H1 (cell line): ENCODE measurements at regions of chr5 and their contacts with region 1.

Region 1: GRCh38 chr5:150560401-150561193 is 52.7 kb downstream of the NDST1 start:
- DNase-seq: peak; percentile 56 to 96
- H3K4me3 ChIP-seq: peak overlapping the region in 1 of 4 experiments; percentile 23; a peak in 1 of 8 replicates
- H3K27ac ChIP-seq: 0 out of 2 replicates have a peak overlapping the region, but pooled peaks have one; percentile 2
- H3K4me1 ChIP-seq: peaks cover 2 to 9% (median 4%) of the 10 kb centered on the region in 4 experiments
- H3K27me3 ChIP-seq: no peaks in the 10 kb centered on the region
- CTCF ChIP-seq: peak; percentile 50 to 91 (median 82)
- EP300 ChIP-seq: peak in 1 of 2 experiments; percentile 20; a peak in 1 of 3 replicates
- POLR2A ChIP-seq: no peak
- RAD21 ChIP-seq: peak; percentile 93 to 94

Region 2: DNA sequence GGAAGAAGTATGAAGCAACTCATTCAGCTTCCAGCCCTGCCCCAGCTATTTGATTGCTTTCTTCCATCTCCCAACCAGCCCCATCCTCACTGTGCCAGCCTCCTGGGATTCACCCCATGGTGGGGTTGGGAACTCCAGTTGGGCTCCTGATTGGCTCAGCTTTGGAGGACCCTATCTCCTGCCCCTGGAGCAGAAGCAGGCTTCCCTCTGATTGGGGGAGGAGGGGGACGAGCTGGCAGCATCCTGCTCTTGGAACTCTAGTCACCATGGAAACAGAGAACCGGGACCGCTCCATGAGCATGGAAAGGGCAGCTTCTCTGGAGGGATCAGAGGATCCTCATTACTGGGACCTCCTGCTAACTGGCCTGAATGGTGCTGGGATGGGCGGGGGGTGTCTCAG is 368.1 kb before region 1 on chr5:
- CTCF ChIA-PET with region 1: no interaction called
- POLR2A ChIA-PET with region 1: no interaction called
- DNase-seq: no peak
- H3K4me3 ChIP-seq: no peak overlapping the region
- H3K27ac ChIP-seq: no peak overlapping the region
- H3K4me1 ChIP-seq: peaks cover 0 to 14% (median 5%) of the 10 kb centered on the region in 4 experiments; a peak in 5 of 7 replicates
- H3K27me3 ChIP-seq: peaks cover 29 to 51% (median 48%) of the 10 kb centered on the region in 4 experiments
- CTCF ChIP-seq: no peak
- EP300 ChIP-seq: no peak
- POLR2A ChIP-seq: no peak
- RAD21 ChIP-seq: no peak

Region 3: GRCh38 chr5:150302301-150303069 is 258.1 kb before region 1 on chr5 and contains the start of gene ARSI:
- CTCF ChIA-PET with region 1: no interaction called
- POLR2A ChIA-PET with region 1: no interaction called
- DNase-seq: peak in 1 of 2 experiments; percentile 86
- H3K4me3 ChIP-seq: peak within 1 kb of the TSS; percentile 41 to 67 (median 55)
- H3K27ac ChIP-seq: no peak within 1 kb of the TSS
- H3K4me1 ChIP-seq: peaks cover 9 to 23% (median 14%) of the 10 kb centered on the region in 4 experiments
- H3K27me3 ChIP-seq: peaks cover 0 to 12% (median 7%) of the 10 kb centered on the region in 4 experiments; a peak in 5 of 7 replicates
- CTCF ChIP-seq: peak in 2 of 3 experiments; percentile 33 to 50; a peak in 3 of 4 replicates
- EP300 ChIP-seq: no peak
- POLR2A ChIP-seq: no peak
- RAD21 ChIP-seq: peak in 1 of 2 experiments; percentile 8; a peak in 1 of 4 replicates
- total RNA-seq, gene ARSI: 4.5 TPM in 2 replicates

Region 4: GRCh38 chr5:150464554-150465012 is 96.0 kb before region 1 on chr5:
- CTCF ChIA-PET with region 1: interaction called, 99 read pairs
- POLR2A ChIA-PET with region 1: interaction called, 3 read pairs
- DNase-seq: peak in 1 of 2 experiments; percentile 59
- H3K4me3 ChIP-seq: no peak overlapping the region
- H3K27ac ChIP-seq: no peak overlapping the region
- H3K4me1 ChIP-seq: peaks cover 3 to 24% (median 14%) of the 10 kb centered on the region in 4 experiments
- H3K27me3 ChIP-seq: no peaks in the 10 kb centered on the region
- CTCF ChIP-seq: no peak
- EP300 ChIP-seq: no peak
- POLR2A ChIP-seq: peak in 1 of 2 experiments; percentile 48; a peak in 2 of 3 replicates
- RAD21 ChIP-seq: no peak

Region 5: DNA sequence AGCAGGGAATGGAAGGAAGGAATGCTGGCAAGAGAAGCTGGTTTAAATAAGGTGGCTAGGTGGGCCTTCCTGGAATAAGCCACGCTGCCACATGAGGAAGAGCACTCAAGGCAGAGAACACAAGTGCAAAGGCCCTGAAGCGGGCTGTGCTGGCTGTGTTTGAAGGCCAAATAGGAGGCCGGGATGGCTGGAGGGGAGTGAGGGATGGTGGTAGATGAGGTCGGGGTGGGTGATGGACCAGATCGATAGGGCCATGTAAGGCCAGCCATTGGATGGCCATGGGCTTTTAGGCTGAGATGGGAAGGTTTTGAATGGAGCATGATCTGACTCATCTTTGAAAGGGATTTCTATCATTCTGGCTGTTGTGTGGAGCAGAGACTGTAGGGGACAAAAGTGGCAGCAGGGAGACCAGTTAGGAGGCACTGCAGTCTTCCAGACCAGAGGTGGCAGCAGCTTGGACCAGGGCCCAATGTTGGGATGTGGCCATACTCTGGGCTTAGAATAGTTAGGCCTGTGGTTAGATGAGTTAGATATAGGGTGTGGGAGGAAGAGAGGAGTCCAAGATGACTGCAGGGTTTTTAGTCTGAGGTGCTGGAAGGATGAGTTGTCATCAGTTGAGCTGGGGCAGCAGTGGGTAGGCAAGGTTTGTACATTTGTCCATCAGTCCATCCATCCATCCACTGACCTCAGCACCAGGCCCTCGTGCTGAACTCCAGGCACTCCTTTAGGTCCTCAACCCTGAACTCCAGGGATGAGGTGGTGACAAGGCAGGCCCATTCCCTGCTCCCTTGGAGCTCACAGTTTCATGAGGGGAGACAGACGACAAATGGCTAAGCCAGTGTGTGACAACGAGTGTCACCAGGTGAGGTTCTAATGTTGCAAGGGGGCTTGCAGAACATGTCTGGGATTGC is 22.3 kb before region 1 on chr5:
- CTCF ChIA-PET with region 1: interaction called, 17 read pairs
- POLR2A ChIA-PET with region 1: interaction called, 3 read pairs
- DNase-seq: no peak
- H3K4me3 ChIP-seq: no peak overlapping the region
- H3K27ac ChIP-seq: no peak overlapping the region
- H3K4me1 ChIP-seq: peaks cover 0 to 3% (median 0%) of the 10 kb centered on the region in 4 experiments; a peak in 2 of 7 replicates
- H3K27me3 ChIP-seq: no peaks in the 10 kb centered on the region
- CTCF ChIP-seq: no peak; a peak in 1 of 4 replicates
- EP300 ChIP-seq: no peak
- POLR2A ChIP-seq: no peak
- RAD21 ChIP-seq: no peak

Region 6: DNA sequence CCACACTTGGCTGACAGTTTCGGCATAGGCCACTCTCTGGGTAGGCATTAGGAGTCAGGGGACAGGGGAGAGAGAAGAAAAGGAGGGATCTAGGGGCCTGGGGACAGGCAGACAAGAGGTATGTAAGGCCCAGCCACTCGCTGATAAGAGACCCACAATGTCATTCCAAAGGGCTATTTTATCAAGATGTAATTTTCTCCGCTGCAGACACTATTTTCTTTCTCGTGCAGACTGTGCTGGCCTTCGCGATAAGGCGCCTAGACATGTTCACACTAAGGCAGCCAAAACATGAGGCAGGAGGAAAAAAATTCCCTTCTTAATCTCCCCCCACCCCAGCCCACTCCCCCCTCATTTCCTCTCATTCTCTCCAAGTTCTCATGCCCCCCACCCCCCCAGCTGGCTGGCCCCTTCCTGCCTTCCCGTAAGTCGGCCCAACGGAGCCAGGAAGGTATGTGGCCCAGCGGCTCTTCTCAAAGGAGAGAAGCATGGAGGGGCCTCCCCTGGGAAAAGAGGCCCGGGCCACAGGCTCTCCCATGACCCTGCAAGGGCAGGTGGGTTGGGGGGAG is 35.0 kb after region 1 on chr5:
- CTCF ChIA-PET with region 1: interaction called, 34 read pairs
- POLR2A ChIA-PET with region 1: interaction called, 3 read pairs
- DNase-seq: no peak
- H3K4me3 ChIP-seq: no peak overlapping the region
- H3K27ac ChIP-seq: no peak overlapping the region
- H3K4me1 ChIP-seq: peaks cover 0 to 7% (median 5%) of the 10 kb centered on the region in 4 experiments; a peak in 6 of 7 replicates
- H3K27me3 ChIP-seq: no peaks in the 10 kb centered on the region
- CTCF ChIP-seq: no peak
- EP300 ChIP-seq: no peak
- POLR2A ChIP-seq: no peak
- RAD21 ChIP-seq: no peak

Region 7: DNA sequence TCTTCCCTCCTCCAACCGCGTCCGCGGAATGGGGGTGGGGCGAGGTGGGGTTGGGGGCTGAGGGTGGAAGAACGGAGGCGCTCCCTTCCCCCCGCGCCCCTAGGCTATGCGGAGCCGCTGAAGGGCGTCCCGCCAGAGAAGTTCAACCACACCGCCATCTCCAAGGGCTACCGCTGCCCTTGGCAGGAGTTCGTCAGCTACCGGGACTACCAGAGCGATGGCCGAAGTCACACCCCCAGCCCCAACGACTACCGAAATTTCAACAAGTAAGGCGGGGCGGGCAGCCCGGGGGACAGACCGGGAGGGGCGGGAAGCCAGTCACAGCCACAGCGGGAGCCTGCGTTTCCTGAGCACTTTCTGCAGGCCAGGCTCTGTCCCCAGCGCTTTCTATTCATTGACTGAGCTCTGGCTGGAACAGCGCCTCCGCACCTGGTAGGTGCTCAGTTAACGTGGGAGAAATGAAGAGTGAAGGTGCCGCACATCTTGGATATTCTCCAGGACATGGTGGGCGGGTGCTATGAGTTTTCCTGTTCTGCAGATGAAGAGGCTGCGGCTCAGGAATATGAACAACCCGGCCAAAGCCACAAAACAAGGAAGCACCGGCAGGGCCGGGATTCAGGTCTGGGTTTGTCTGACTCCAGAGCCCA is 111.8 kb after region 1 on chr5:
- CTCF ChIA-PET with region 1: interaction called, 18 read pairs
- POLR2A ChIA-PET with region 1: interaction called, 28 read pairs
- DNase-seq: peak; percentile 58 to 84
- H3K4me3 ChIP-seq: peak overlapping the region; percentile 88 to 96 (median 93)
- H3K27ac ChIP-seq: peak overlapping the region; percentile 90
- H3K4me1 ChIP-seq: peaks cover 5 to 23% (median 14%) of the 10 kb centered on the region in 4 experiments
- H3K27me3 ChIP-seq: no peaks in the 10 kb centered on the region
- CTCF ChIP-seq: no peak
- EP300 ChIP-seq: no peak
- POLR2A ChIP-seq: peak in 1 of 2 experiments; percentile 52; a peak in 2 of 3 replicates
- RAD21 ChIP-seq: no peak

Region 8: DNA sequence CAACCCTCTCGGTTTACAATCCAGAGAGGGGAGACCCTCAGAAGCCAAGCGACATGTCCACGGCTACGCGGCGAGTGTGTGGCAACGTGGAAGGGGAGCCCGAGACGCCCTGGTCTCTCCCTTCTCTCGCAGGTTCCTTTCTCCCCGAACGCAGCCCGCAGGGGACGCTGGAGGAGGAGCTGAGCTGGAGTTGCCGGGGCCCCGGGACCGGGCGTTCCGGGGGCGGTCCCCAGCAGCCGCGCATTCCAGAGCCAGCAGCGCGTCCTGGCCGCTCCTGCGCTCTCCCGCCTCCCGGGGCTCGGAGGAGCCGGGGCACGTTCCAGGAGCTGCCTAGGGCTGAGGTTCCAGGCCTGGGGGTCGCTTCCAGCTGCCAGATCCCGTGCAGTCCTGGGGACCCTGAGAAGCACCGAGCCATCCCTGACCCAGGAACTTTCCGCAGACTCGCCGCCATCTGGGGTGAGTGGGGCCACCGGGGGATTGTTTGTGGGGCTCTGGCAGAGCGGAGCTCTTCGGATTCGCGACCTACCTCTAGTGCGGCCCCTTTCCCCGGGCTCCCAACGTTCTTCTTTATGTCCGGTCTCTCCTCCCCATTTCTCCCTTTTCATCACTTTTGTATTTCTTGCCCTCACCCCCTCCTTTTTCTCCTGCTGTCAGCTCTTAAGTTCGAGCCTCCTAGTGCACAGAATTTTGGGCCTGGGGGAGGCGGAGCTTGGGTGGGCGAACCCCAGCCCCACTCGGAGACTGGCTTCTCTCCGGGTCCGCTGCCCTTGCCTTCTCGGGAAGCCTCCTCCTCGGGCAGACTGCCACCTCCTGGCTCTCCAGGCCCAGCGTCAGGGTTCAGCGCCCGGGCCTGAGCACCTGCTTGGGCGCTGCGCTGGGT is 218.2 kb after region 1 on chr5 and contains the start of gene SMIM3:
- CTCF ChIA-PET with region 1: interaction called, 16 read pairs
- POLR2A ChIA-PET with region 1: interaction called, 10 read pairs
- DNase-seq: peak in 1 of 2 experiments; percentile 86
- H3K4me3 ChIP-seq: peak within 1 kb of the TSS; percentile 51 to 80 (median 74)
- H3K27ac ChIP-seq: 0 out of 2 replicates have a peak within 1 kb of the TSS, but pooled peaks have one; percentile 8
- H3K4me1 ChIP-seq: peaks cover 6 to 14% (median 10%) of the 10 kb centered on the region in 4 experiments; a peak in 5 of 7 replicates
- H3K27me3 ChIP-seq: peaks cover 0 to 8% (median 0%) of the 10 kb centered on the region in 4 experiments; a peak in 3 of 7 replicates
- CTCF ChIP-seq: peak; percentile 53 to 67 (median 60)
- EP300 ChIP-seq: no peak
- POLR2A ChIP-seq: peak; percentile 34 to 82
- RAD21 ChIP-seq: peak; percentile 64 to 74
- total RNA-seq, gene SMIM3: 10.4 and 13.2 TPM in 2 replicates